ENCODE measurements at regions of chr9 and their contacts with region 1.

Region 1: DNA sequence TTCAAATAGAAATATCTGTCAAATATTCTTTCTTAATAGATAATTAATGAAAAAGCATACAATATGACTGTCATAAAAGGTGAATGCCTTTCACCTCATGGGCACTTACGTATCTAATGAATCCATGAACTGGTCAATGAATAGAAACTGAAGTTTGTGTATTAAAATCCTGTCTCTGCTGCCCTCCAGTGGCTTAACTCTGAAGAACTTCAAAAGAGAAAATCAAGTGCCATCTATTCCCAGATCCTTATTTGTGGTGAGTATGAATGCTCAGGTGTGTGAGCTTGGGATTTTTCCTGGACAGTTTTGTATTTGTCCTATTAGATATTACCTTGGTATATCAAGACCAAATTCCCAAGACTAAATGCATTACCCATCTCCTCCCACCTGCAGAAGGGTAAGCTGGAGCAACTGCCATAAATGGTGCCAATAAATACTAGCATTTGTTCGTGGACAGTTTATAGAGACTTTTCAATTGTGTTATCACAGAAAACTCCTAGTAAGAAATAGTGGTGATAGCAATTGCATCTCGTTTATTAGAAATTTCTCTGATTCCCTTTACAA is 44.0 kb upstream of the SVEP1 start:
- H3K4me3 Mint-ChIP-seq: no peak overlapping the region
- H3K27ac Mint-ChIP-seq: no peak overlapping the region
- H3K4me1 Mint-ChIP-seq: peaks cover 14% of the 10 kb centered on the region
- H3K27me3 Mint-ChIP-seq: peaks cover 3% of the 10 kb centered on the region

Region 2: GRCh38 chr9:110427497-110428104 is 195.9 kb before region 1 on chr9:
- intact Hi-C with region 1: loop called (anchors 5 kb)
- H3K4me3 Mint-ChIP-seq: no peak overlapping the region
- H3K27ac Mint-ChIP-seq: no peak overlapping the region
- H3K4me1 Mint-ChIP-seq: peaks cover 5% of the 10 kb centered on the region
- H3K27me3 Mint-ChIP-seq: peaks cover 3% of the 10 kb centered on the region

Region 3: GRCh38 chr9:110452227-110452801 is 171.2 kb before region 1 on chr9:
- intact Hi-C with region 1: loop called (anchors 1 kb)
- H3K4me3 Mint-ChIP-seq: no peak overlapping the region
- H3K27ac Mint-ChIP-seq: no peak overlapping the region
- H3K4me1 Mint-ChIP-seq: no peaks in the 10 kb centered on the region
- H3K27me3 Mint-ChIP-seq: peaks cover 8% of the 10 kb centered on the region

Region 4: GRCh38 chr9:110777196-110777875 is 153.8 kb after region 1 on chr9:
- intact Hi-C with region 1: no loop called
- H3K4me3 Mint-ChIP-seq: no peak overlapping the region
- H3K27ac Mint-ChIP-seq: no peak overlapping the region
- H3K4me1 Mint-ChIP-seq: no peaks in the 10 kb centered on the region
- H3K27me3 Mint-ChIP-seq: peaks cover 7% of the 10 kb centered on the region

Region 5: GRCh38 chr9:111016426-111017045 is 393.0 kb after region 1 on chr9:
- intact Hi-C with region 1: no loop called
- H3K4me3 Mint-ChIP-seq: no peak overlapping the region
- H3K27ac Mint-ChIP-seq: no peak overlapping the region
- H3K4me1 Mint-ChIP-seq: peaks cover 16% of the 10 kb centered on the region
- H3K27me3 Mint-ChIP-seq: peaks cover 5% of the 10 kb centered on the region